Esophagus muscularis mucosa (tissue), 4 donors: ENCODE measurements at regions of chr13 and their contacts with region 1.

Region 1: DNA sequence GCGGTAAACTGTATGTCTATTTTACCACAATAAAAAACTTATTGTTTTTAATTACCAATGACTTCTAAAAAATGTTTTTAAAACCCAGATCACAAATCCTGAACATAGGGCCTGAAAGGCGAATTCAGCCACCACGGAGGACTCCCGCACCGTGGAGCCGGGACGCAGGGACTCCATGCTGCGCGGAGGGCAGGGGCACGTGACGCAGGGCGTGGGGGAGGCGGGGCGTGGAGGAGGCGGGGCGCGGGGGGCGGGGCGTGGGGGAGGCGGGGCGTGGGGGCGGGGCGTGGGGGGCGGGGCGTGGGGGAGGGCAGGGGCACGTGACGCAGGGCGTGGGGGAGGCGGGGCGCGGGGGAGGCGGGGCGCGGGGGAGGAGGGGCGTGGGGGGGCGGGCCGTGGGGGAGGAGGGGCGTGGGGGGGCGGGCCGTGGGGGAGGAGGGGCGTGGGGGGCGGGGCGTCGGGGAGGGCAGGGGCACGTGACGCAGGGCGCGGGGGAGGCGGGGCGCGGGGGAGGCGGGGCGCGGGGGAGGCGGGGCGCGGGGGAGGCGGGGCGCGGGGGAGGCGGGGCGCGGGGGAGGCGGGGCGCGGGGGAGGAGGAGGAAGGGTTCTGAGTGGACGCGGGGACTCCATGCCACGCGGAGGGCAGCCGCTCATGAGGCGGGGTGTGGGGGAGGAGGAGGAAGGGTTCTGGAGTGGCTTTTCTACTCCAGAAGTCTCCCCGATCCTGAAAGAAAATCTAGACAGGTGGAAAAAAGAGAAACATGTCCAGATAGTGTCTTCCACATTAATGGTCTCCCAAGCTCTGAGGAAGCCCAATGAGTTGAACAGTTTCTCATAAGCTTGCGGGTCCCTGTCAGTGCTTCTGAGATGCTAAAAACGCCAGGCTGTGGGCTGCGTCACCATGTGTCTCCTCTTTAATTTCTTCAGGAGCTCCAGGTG is 4.4 kb upstream of the PROZ start:
- DNase-seq: peak; percentile 95
- H3K4me3 ChIP-seq: peak overlapping the region; percentile 50 to 58 (median 52)
- H3K27ac ChIP-seq: peak overlapping the region; percentile 79 to 80 (median 80)
- H3K4me1 ChIP-seq: peaks cover 18 to 25% (median 22%) of the 10 kb centered on the region in 4 donors
- H3K27me3 ChIP-seq: peaks cover 0 to 8% (median 0%) of the 10 kb centered on the region in 4 donors
- CTCF ChIP-seq: no peak
- EP300 ChIP-seq: no peak
- POLR2A ChIP-seq: no peak

Region 2: GRCh38 chr13:111184458-111185401 is 1969.3 kb before region 1 on chr13:
- intact Hi-C with region 1: no loop called
- DNase-seq: no peak
- H3K4me3 ChIP-seq: peak overlapping the region in 1 of 4 donors; percentile 7
- H3K27ac ChIP-seq: peak overlapping the region; percentile 31 to 43 (median 38)
- H3K4me1 ChIP-seq: peaks cover 50 to 71% (median 60%) of the 10 kb centered on the region in 4 donors
- H3K27me3 ChIP-seq: no peaks in the 10 kb centered on the region
- CTCF ChIP-seq: no peak
- EP300 ChIP-seq: no peak
- POLR2A ChIP-seq: no peak

Region 3: GRCh38 chr13:113208424-113209335 is 54.6 kb after region 1 on chr13 and contains the start of gene PCID2:
- intact Hi-C with region 1: loop called (anchors 2 kb)
- DNase-seq: peak; percentile 96
- H3K4me3 ChIP-seq: peak within 1 kb of the TSS; percentile 87 to 88 (median 88)
- H3K27ac ChIP-seq: peak within 1 kb of the TSS; percentile 99 to 100 (median 100)
- H3K4me1 ChIP-seq: peaks cover 47 to 82% (median 80%) of the 10 kb centered on the region in 4 donors
- H3K27me3 ChIP-seq: no peaks in the 10 kb centered on the region
- CTCF ChIP-seq: no peak
- EP300 ChIP-seq: no peak
- POLR2A ChIP-seq: peak; percentile 78
- total RNA-seq, gene PCID2: 34.5 to 46.9 (median 42.3) TPM

Region 4: GRCh38 chr13:113364311-113364889 is 210.3 kb after region 1 on chr13:
- intact Hi-C with region 1: loop called (anchors 5 kb)
- DNase-seq: no peak
- H3K4me3 ChIP-seq: peak overlapping the region; percentile 65 to 82 (median 76)
- H3K27ac ChIP-seq: peak overlapping the region; percentile 79 to 84 (median 81)
- H3K4me1 ChIP-seq: peaks cover 8 to 29% (median 26%) of the 10 kb centered on the region in 4 donors
- H3K27me3 ChIP-seq: peaks cover 0 to 9% (median 2%) of the 10 kb centered on the region in 4 donors
- CTCF ChIP-seq: no peak
- EP300 ChIP-seq: no peak
- POLR2A ChIP-seq: no peak

Region 5: DNA sequence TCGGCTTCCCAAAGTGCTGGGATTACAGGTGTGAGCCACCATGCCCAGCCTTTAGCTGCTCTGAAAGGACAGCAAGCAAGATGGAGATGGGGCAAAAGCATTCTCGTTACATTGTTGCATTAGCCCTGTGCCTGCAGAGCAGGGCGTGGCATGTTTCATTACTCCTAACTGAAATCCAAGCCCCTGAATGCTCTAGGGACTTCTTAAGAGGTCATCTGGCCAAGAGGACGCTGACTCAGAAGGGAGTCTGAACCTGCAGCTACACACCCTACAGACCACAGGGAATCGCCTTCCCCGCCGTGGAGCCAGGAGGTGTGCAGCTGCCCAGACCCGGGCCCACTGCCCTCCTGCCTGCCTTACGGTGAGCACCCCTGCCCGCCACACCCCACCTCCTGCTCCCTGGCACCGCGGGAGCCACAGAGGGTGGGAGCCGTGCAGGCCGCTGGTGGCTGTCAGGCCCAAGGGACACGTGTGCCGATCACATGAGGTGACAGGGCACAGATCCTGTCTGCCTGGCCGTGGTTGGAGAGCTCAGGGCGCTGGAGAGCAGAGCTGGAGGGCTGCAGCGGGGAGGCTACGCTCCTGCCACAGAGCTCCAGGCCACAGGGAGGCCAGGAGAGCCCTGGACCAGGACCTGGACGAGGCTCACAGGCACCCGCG is 272.0 kb after region 1 on chr13:
- intact Hi-C with region 1: no loop called
- DNase-seq: no peak
- H3K4me3 ChIP-seq: no peak overlapping the region
- H3K27ac ChIP-seq: no peak overlapping the region
- H3K4me1 ChIP-seq: peaks cover 0 to 27% (median 17%) of the 10 kb centered on the region in 4 donors
- H3K27me3 ChIP-seq: no peaks in the 10 kb centered on the region
- CTCF ChIP-seq: no peak
- EP300 ChIP-seq: no peak
- POLR2A ChIP-seq: no peak

Region 6: GRCh38 chr13:113489549-113490495 is 335.7 kb after region 1 on chr13:
- intact Hi-C with region 1: loop called (anchors 10 kb)
- DNase-seq: peak; percentile 88
- H3K4me3 ChIP-seq: peak overlapping the region; percentile 79 to 94 (median 92)
- H3K27ac ChIP-seq: peak overlapping the region; percentile 91 to 94 (median 92)
- H3K4me1 ChIP-seq: peaks cover 54 to 84% (median 73%) of the 10 kb centered on the region in 4 donors
- H3K27me3 ChIP-seq: no peaks in the 10 kb centered on the region
- CTCF ChIP-seq: no peak
- EP300 ChIP-seq: no peak
- POLR2A ChIP-seq: no peak